OCI-LY7 (cell line): ENCODE measurements at regions of chr3 and their contacts with region 1.

Region 1: DNA sequence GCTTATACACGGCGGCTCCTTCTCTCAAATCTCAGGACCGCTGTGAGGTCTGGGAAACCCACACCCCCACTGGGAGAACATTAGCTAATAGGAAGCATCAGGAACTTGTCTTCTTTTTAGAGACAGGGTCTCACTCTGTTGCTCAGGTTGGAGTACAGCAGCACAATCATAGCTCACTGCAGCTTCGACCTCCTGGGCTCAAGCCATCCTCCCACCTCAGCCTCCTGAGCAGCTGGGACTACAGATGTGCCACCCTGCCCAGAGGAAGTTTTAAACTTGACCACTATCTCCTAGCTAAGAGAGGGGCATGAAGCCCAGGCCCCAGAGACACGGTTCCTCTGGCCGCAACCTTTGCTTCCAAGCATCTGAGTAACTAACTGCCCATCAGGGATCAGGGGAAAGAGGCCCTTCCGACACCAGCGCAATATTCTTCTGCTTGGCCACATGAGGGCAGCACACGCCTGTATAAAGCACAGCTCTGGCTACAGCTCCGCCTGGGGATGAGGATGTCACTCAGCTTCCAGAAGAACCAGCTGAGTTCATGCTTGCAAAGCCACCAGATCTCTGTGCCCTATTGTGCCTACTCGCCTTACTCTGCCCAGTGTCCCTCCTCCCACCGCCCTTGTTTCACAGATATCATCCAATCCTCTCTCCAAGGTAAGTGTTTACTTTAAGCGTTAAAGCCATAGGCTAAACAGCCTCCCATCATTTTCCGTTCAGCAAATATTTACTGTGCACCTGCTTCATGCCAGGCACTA is 57.5 kb upstream of the SLC6A11 start:
- DNase-seq: peak; percentile 58
- H3K4me3 ChIP-seq: no peak overlapping the region
- H3K27ac ChIP-seq: no peak overlapping the region
- H3K4me1 ChIP-seq: no peaks in the 10 kb centered on the region
- CTCF ChIP-seq: peak; percentile 78

Region 2: GRCh38 chr3:10883478-10884234 is 125.2 kb after region 1 on chr3:
- CTCF ChIA-PET with region 1: no interaction called
- POLR2A ChIA-PET with region 1: no interaction called
- intact Hi-C with region 1: loop called (anchors 1 kb)
- DNase-seq: peak; percentile 37
- H3K4me3 ChIP-seq: no peak overlapping the region
- H3K27ac ChIP-seq: no peak overlapping the region
- H3K4me1 ChIP-seq: no peaks in the 10 kb centered on the region
- CTCF ChIP-seq: peak; percentile 81

Region 3: GRCh38 chr3:10983219-10983916 is 224.9 kb after region 1 on chr3:
- CTCF ChIA-PET with region 1: no interaction called
- POLR2A ChIA-PET with region 1: interaction called, 3 read pairs
- intact Hi-C with region 1: loop called (anchors 5 kb)
- DNase-seq: peak; percentile 12
- H3K4me3 ChIP-seq: no peak overlapping the region
- H3K27ac ChIP-seq: no peak overlapping the region
- H3K4me1 ChIP-seq: no peaks in the 10 kb centered on the region
- CTCF ChIP-seq: peak; percentile 87